Colonic mucosa (tissue), 4 donors: ENCODE measurements at regions of chr11 and their contacts with region 1.

Region 1: GRCh38 chr11:14886513-14886912 is 5.5 kb downstream of the CYP2R1 start:
- DNase-seq: peak; percentile 20
- H3K4me3 ChIP-seq: no peak overlapping the region
- H3K27ac ChIP-seq: no peak overlapping the region
- H3K4me1 ChIP-seq: no peaks in the 10 kb centered on the region
- H3K27me3 ChIP-seq: no peaks in the 10 kb centered on the region
- CTCF ChIP-seq: no peak

Region 2: DNA sequence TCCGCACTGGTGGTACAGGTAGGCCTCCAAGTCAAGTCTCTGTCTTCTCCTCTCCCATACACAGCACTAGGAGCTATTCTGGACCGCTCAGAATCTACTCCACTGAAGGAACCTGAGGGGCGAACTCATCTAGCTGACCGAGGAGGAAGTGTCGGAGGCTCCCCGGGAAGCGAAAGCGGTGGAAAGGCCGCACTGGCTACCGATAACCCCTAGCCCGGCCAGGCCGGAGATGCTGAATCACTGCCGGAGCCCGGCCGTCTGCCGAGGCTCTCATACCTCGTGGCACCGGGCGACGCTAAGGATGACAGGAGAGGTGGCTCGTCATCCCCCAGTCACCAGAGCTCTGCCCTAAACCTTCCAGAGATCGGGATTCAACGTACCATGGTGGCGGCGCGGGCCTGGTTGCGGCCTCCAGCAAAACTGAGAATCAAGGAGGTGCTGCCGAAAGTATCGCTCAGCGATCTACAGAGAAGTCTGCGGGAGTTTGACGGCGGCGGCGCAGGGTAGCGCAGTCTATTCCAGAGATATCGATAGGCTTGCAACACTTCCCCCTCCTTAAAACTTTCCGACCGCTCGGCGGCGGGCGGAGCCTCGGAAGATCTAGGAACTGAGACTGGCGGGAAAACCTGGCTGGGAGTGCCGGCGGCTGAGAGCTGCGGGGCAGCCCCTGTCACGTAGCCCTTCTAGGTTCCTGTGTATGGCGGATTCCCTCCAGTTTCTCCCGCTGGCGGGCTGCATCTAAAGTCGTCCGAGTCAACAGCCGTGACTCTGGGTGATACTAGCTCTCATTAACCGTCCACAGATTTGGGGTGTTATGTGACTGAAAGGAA is 366.4 kb before region 1 on chr11 and contains the start of gene PSMA1:
- intact Hi-C with region 1: loop called (anchors 5 kb)
- DNase-seq: peak; percentile 97
- H3K4me3 ChIP-seq: peak within 1 kb of the TSS; percentile 76
- H3K27ac ChIP-seq: peak within 1 kb of the TSS; percentile 85
- H3K4me1 ChIP-seq: no peaks in the 10 kb centered on the region
- H3K27me3 ChIP-seq: no peaks in the 10 kb centered on the region
- CTCF ChIP-seq: peak; percentile 42
- total RNA-seq, gene PSMA1: 120 to 147 TPM